ENCODE measurements at regions of chr11 and their contacts with region 1.

Region 1: DNA sequence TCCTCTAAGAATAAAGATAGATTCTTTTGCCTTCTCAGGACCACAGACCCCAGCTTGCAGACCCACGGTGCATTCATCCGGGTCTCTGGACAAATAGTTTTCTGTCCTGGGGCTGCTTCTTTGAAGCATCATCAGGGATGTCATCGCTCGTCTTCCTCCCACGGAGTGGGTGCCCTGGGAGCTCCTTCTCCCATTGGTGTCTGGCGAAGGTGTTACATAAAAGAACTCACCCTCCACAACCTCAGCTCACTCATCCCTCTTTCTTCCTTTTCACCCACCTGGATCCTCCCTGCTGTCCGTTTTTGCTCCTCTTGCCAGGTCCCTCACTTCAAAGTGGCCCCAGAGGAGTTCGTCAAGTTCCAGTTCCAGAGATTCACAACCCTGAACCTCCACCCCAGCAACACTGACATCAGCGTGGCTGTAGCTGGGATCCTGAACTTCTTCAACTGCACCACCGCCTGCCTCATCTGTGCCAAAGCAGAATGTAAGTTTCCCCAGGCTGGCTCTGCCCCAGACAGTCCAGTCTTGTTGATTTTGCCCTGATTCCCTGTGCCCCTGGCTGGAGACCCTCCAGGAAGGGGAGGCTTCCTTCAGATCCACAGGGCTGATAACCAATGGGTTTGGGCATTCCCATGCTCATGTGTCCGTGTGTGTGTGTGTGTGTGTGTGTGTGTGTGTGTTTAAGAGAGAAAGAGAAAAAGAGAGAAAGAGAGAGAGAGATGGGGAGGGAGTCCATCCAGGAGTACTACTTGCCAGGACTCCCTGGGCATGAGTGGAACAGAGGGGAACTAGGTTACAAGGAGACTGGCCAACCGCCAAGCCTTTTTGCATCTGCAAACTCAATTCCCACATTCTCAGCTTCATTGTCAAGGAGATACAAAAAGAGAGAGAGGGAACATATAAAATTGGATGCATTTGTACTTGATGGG is 204.2 kb upstream of the TBCEL start:
- DNase-seq: no peak

Region 2: GRCh38 chr11:119599864-119600541 is 1219.7 kb before region 1 on chr11:
- intact Hi-C with region 1: loop called in 1 of 2 experiments (anchors 5 kb)
- DNase-seq: peak; percentile 10

Region 3: GRCh38 chr11:120746836-120747609 is 72.7 kb before region 1 on chr11:
- intact Hi-C with region 1: no loop called
- DNase-seq: no peak

Region 4: DNA sequence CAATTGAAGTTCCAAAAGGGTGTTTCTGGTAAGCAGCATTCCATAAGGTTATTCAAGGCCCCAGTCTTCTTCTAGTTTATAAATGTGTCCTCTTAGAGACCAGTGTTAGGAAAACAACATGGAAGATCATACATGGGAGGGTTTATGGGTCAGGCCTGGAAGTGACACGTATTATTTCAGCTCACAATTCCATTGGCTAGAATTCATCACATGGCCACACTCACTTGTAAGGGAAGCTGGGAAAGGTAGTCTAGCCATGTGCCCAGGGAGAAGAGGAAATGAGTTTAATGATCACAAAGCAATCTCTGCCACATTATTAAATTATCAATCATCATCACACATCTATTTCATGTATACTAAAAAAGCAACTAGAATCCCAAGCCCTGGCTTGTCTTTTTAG is 22.5 kb after region 1 on chr11:
- intact Hi-C with region 1: no loop called
- DNase-seq: no peak

Measured in posterior vena cava (tissue), 2 donors.